WTC11 (cell line): ENCODE measurements at regions of chr12 and their contacts with region 1.

Region 1: GRCh38 chr12:53492830-53493611 is 6.2 kb downstream of the MAP3K12 start:
- DNase-seq: peak; percentile 96
- ATAC-seq: peak; percentile 78
- H3K4me3 Mint-ChIP-seq: peak overlapping the region; percentile 88
- H3K27ac Mint-ChIP-seq: peak overlapping the region; percentile 99
- H3K4me1 Mint-ChIP-seq: peaks cover 46% of the 10 kb centered on the region
- H3K27me3 Mint-ChIP-seq: no peaks in the 10 kb centered on the region
- CTCF ChIP-seq: no peak

Region 2: DNA sequence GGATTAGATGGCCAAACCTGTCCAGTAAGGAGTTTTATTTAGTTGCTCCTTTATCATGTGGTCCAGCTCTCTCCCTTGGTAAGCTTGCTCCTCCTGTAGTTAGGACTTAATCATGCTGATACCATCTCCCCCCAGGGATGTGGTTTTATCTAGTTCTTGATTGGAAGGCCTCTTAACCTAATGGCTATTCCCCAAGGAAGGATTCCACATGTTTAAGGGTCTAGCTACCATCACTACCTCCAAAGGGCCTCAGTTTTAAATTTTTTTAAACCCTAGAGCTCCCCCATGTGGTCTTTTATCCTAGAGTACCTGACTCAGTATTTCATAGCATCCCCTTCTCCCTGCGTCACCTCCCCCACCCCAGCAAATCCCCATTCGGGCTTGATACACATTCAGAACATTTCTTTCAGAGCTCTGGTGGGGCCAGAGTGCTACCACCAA is 16.2 kb before region 1 on chr12:
- CTCF ChIA-PET with region 1: interaction called, 39 read pairs
- POLR2A ChIA-PET with region 1: interaction called, 23 read pairs
- DNase-seq: no peak
- ATAC-seq: peak; percentile 69
- H3K4me3 Mint-ChIP-seq: no peak overlapping the region
- H3K27ac Mint-ChIP-seq: peak overlapping the region; percentile 89
- H3K4me1 Mint-ChIP-seq: peaks cover 43% of the 10 kb centered on the region
- H3K27me3 Mint-ChIP-seq: no peaks in the 10 kb centered on the region
- CTCF ChIP-seq: peak; percentile 27; the same call in 1 of the 2 replicates

Region 3: GRCh38 chr12:53481957-53482586 is 10.9 kb before region 1 on chr12:
- CTCF ChIA-PET with region 1: interaction called, 39 read pairs
- POLR2A ChIA-PET with region 1: interaction called, 23 read pairs
- DNase-seq: peak; percentile 19
- ATAC-seq: peak; percentile 63
- H3K4me3 Mint-ChIP-seq: no peak overlapping the region
- H3K27ac Mint-ChIP-seq: peak overlapping the region; percentile 86
- H3K4me1 Mint-ChIP-seq: peaks cover 17% of the 10 kb centered on the region
- H3K27me3 Mint-ChIP-seq: no peaks in the 10 kb centered on the region
- CTCF ChIP-seq: peak; percentile 13; the same call in 1 of the 2 replicates

Region 4: DNA sequence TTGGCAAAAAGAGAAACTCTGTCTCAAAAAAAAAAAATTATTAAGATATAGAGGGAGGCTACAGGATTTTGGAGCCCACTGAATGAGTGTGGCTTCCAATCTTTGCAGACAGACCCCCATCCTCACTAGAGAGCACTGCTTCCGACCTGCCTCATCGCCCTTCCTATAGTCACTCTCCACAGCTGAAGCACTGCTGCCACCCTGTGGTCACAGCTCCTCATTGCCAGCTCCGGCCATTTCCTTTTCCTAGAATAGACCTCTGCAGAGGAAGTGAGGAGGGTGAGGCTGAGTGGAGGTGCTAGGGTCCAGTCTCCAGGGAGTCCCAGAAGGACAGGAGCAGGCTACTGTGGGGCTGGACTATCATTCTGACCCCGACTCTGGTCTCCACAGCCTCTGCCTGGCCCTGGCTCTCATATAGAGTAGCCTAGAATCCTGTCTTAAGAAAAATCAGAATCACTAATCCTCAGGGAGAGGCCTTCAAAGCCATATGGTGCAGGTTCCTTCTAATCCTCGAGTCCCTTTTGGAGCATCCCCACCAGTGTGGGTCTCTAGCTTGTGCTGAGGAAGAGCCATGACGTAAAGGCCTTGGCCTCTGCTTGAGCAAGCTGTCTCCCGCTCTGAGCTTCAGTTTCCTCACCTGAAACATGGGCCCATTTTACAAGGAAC is 15.6 kb after region 1 on chr12:
- CTCF ChIA-PET with region 1: interaction called, 18 read pairs
- POLR2A ChIA-PET with region 1: interaction called, 3 read pairs
- DNase-seq: peak; percentile 94
- ATAC-seq: peak; percentile 93
- H3K4me3 Mint-ChIP-seq: no peak overlapping the region
- H3K27ac Mint-ChIP-seq: no peak overlapping the region
- H3K4me1 Mint-ChIP-seq: peaks cover 4% of the 10 kb centered on the region; the same call in 1 of the 2 replicates
- H3K27me3 Mint-ChIP-seq: no peaks in the 10 kb centered on the region
- CTCF ChIP-seq: peak; percentile 83